ENCODE measurements at regions of chr14 and their contacts with region 1.

Region 1: DNA sequence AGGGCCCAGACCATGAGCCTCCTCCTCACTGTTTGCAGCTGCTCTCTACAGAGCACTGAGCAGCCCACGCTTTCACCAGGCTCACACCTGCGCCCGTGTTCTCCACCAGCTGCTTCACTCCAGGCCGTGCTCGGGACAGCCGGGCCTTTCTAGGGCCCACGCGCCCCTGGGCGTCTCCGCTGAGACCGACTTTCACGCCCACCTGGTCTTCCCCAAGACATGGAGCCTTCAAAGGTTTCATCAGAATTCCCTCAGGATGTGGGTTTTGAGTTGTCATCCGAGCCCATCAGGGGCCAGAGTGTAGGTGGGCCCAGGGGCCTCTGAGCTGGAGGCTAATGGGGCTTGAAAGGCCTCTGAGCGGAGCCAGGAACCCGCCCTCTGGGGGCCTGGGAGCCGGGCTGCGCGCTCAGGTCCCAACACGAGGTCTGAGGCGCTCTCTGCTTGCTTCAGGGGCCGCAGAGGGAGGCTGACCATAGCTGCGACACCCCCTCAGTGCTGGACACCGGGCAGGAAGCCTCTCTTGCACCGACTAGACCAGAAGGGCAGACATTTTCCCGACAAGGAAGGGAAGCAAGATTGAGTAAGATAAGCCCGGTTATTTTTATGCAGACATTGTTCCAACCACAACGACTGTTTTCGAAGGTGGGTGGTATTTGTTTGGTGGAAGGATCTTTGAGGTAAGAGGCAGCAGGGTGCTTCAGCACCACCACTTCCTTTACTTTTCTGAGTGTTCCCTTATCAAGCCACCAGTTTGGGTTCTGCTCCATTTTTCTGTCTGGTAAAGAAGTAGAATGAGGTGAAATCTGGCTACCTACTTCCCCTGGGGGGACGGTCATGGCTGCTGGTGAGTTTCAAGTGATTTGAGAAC is 125.0 kb upstream of the FUT8 start:
- DNase-seq: peak; percentile 60
- ATAC-seq: peak; percentile 64
- H3K4me3 Mint-ChIP-seq: peak overlapping the region; percentile 74
- H3K27ac Mint-ChIP-seq: peak overlapping the region; percentile 96
- H3K4me1 Mint-ChIP-seq: peaks cover 89% of the 10 kb centered on the region
- H3K27me3 Mint-ChIP-seq: no peaks in the 10 kb centered on the region
- CTCF ChIP-seq: no peak

Region 2: GRCh38 chr14:64844272-64844671 is 443.2 kb before region 1 on chr14:
- CTCF ChIA-PET with region 1: no interaction called
- POLR2A ChIA-PET with region 1: no interaction called
- intact Hi-C with region 1: no loop called
- DNase-seq: no peak
- ATAC-seq: peak; percentile 40
- H3K4me3 Mint-ChIP-seq: no peak overlapping the region
- H3K27ac Mint-ChIP-seq: no peak overlapping the region
- H3K4me1 Mint-ChIP-seq: peaks cover 8% of the 10 kb centered on the region
- H3K27me3 Mint-ChIP-seq: peaks cover 26% of the 10 kb centered on the region
- CTCF ChIP-seq: no peak

Region 3: GRCh38 chr14:65142429-65142828 is 145.1 kb before region 1 on chr14:
- CTCF ChIA-PET with region 1: no interaction called
- POLR2A ChIA-PET with region 1: no interaction called
- intact Hi-C with region 1: no loop called
- DNase-seq: no peak
- ATAC-seq: no peak
- H3K4me3 Mint-ChIP-seq: no peak overlapping the region
- H3K27ac Mint-ChIP-seq: no peak overlapping the region
- H3K4me1 Mint-ChIP-seq: no peaks in the 10 kb centered on the region
- H3K27me3 Mint-ChIP-seq: peaks cover 18% of the 10 kb centered on the region
- CTCF ChIP-seq: no peak

Region 4: GRCh38 chr14:65164068-65164824 is 123.3 kb before region 1 on chr14:
- CTCF ChIA-PET with region 1: interaction called, 23 read pairs
- POLR2A ChIA-PET with region 1: interaction called, 11 read pairs
- intact Hi-C with region 1: loop called (anchors 1 kb)
- DNase-seq: no peak
- ATAC-seq: peak; percentile 33
- H3K4me3 Mint-ChIP-seq: no peak overlapping the region
- H3K27ac Mint-ChIP-seq: peak overlapping the region; percentile 56
- H3K4me1 Mint-ChIP-seq: peaks cover 53% of the 10 kb centered on the region
- H3K27me3 Mint-ChIP-seq: no peaks in the 10 kb centered on the region
- CTCF ChIP-seq: peak; percentile 29

Region 5: DNA sequence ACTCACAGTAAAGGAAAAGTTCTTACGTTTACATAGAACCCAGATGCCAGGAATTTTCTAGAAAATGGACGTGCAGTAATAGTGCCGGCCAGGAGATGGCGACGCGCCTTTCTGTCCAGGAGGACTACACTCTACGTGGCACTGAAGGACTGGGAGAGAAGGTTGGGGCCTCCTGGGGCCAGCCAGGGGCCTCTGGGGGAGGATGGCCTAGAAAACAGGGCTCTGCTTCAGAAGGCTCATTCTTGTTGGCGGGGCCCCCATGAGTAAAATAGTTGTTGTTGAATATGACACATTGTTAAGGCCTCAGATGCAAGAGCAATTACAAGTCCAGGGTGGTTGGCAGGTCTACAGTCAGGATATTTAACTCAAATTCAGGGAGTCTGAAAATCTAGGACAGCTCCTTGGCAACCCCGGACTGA is 65.0 kb before region 1 on chr14:
- CTCF ChIA-PET with region 1: interaction called, 3 read pairs
- POLR2A ChIA-PET with region 1: interaction called, 35 read pairs
- intact Hi-C with region 1: loop called (anchors 1 kb)
- DNase-seq: no peak
- ATAC-seq: peak; percentile 91
- H3K4me3 Mint-ChIP-seq: peak overlapping the region; percentile 11
- H3K27ac Mint-ChIP-seq: peak overlapping the region; percentile 18
- H3K4me1 Mint-ChIP-seq: peaks cover 62% of the 10 kb centered on the region
- H3K27me3 Mint-ChIP-seq: no peaks in the 10 kb centered on the region
- CTCF ChIP-seq: peak; percentile 58

Region 6: GRCh38 chr14:65251213-65251612 is 36.3 kb before region 1 on chr14:
- CTCF ChIA-PET with region 1: no interaction called
- POLR2A ChIA-PET with region 1: no interaction called
- intact Hi-C with region 1: no loop called
- DNase-seq: no peak
- ATAC-seq: no peak
- H3K4me3 Mint-ChIP-seq: no peak overlapping the region
- H3K27ac Mint-ChIP-seq: peak overlapping the region; percentile 18
- H3K4me1 Mint-ChIP-seq: peaks cover 9% of the 10 kb centered on the region
- H3K27me3 Mint-ChIP-seq: no peaks in the 10 kb centered on the region
- CTCF ChIP-seq: no peak

Region 7: DNA sequence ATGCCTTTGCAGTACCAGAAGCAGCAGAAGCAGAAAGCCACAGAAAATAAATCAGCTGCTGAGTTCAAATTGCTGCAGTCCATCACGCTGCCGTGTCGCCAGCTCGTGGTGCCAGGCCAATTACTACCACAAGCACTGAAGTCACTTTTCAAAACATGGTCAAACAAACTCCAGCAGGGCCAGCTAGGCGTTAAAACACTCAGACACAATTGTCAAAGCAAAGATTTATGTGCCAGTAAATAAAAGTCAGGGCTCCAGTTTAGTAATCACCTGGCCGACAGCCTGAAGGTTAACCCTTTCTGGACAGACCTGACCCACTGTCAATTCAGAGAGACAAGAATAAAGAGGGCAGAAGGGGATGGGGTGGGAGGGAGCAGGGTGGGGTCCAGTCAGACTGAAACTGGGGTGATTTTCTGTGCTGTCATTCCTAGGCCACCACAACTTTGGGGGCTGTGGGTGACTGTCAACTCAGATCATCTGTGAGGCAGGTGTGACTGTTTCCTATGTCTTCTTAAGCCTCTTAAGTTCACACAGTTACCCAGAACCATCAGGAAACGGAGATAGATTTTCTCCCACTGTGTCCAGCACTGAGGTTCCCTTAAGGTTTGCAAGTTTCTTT is 15.2 kb after region 1 on chr14:
- CTCF ChIA-PET with region 1: interaction called, 9 read pairs
- POLR2A ChIA-PET with region 1: interaction called, 175 read pairs
- intact Hi-C with region 1: loop called (anchors 1 kb)
- DNase-seq: no peak
- ATAC-seq: peak; percentile 40
- H3K4me3 Mint-ChIP-seq: peak overlapping the region; percentile 48
- H3K27ac Mint-ChIP-seq: peak overlapping the region; percentile 96
- H3K4me1 Mint-ChIP-seq: peaks cover 79% of the 10 kb centered on the region
- H3K27me3 Mint-ChIP-seq: no peaks in the 10 kb centered on the region
- CTCF ChIP-seq: no peak

Region 8: DNA sequence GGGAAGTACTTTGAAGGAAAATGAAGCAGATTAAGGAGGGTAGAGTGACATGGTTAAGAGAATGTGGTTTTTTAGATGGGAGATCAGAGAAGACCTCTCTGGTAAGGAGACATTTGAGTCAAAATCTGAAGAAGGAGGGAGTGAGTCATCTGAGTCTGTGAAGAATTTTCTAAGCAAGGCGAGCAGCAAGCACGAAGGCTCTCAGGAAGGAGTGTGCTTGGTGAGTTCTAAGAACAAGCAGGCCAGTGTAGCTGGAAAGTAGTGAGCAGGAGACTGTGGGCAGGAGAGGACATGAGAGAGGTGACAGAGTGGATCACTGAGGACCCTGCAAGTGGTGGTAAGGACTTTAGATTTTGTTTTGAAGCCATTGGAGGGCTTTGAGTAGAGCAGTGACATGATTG is 48.7 kb after region 1 on chr14:
- CTCF ChIA-PET with region 1: interaction called, 3 read pairs
- POLR2A ChIA-PET with region 1: interaction called, 13 read pairs
- intact Hi-C with region 1: no loop called
- DNase-seq: no peak
- ATAC-seq: peak; percentile 70
- H3K4me3 Mint-ChIP-seq: peak overlapping the region; percentile 52
- H3K27ac Mint-ChIP-seq: peak overlapping the region; percentile 63
- H3K4me1 Mint-ChIP-seq: peaks cover 59% of the 10 kb centered on the region
- H3K27me3 Mint-ChIP-seq: no peaks in the 10 kb centered on the region
- CTCF ChIP-seq: no peak

Region 9: DNA sequence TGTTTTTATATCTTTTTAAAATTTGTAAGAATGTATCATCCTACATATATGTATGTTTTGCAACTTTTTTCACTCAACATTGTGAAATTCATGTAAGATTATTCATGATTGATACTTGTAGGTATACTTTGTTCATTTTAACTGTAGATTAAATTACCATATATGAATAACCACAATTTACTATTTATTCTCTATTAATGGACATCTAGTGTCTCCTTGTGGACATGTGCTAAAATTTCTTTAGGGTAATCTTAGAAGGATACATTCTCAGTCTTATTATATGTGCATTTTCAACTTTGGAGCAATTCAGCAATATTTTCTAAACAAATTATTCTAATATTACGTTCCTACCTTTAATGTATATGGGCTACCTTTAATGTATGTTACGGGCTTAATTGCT is 317.4 kb after region 1 on chr14:
- CTCF ChIA-PET with region 1: interaction called, 3 read pairs
- POLR2A ChIA-PET with region 1: no interaction called
- intact Hi-C with region 1: loop called (anchors 1 kb)
- DNase-seq: no peak
- ATAC-seq: peak; percentile 21
- H3K4me3 Mint-ChIP-seq: no peak overlapping the region
- H3K27ac Mint-ChIP-seq: no peak overlapping the region
- H3K4me1 Mint-ChIP-seq: peaks cover 7% of the 10 kb centered on the region
- H3K27me3 Mint-ChIP-seq: no peaks in the 10 kb centered on the region
- CTCF ChIP-seq: no peak